Right lobe of liver (tissue), 6 donors: ENCODE measurements at regions of chr10 and their contacts with region 1.

Region 1: GRCh38 chr10:71569775-71570588 is 149.6 kb downstream of the C10orf105 start:
- DNase-seq: peak in 2 of 3 donors; percentile 57 to 79
- ATAC-seq: peak; percentile 71 to 90 (median 82)
- H3K4me3 ChIP-seq: no peak overlapping the region
- H3K27ac ChIP-seq: no peak overlapping the region
- H3K4me1 ChIP-seq: no peaks in the 10 kb centered on the region
- H3K27me3 ChIP-seq: no peaks in the 10 kb centered on the region
- CTCF ChIP-seq: peak; percentile 85 to 88 (median 86)
- POLR2A ChIP-seq: no peak

Region 2: GRCh38 chr10:71390461-71390835 is 179.5 kb before region 1 on chr10:
- intact Hi-C with region 1: loop called (anchors 5 kb)
- DNase-seq: peak in 1 of 3 donors; percentile 38
- ATAC-seq: no peak
- H3K4me3 ChIP-seq: no peak overlapping the region
- H3K27ac ChIP-seq: no peak overlapping the region
- H3K4me1 ChIP-seq: no peaks in the 10 kb centered on the region
- H3K27me3 ChIP-seq: no peaks in the 10 kb centered on the region
- CTCF ChIP-seq: no peak
- POLR2A ChIP-seq: no peak

Region 3: DNA sequence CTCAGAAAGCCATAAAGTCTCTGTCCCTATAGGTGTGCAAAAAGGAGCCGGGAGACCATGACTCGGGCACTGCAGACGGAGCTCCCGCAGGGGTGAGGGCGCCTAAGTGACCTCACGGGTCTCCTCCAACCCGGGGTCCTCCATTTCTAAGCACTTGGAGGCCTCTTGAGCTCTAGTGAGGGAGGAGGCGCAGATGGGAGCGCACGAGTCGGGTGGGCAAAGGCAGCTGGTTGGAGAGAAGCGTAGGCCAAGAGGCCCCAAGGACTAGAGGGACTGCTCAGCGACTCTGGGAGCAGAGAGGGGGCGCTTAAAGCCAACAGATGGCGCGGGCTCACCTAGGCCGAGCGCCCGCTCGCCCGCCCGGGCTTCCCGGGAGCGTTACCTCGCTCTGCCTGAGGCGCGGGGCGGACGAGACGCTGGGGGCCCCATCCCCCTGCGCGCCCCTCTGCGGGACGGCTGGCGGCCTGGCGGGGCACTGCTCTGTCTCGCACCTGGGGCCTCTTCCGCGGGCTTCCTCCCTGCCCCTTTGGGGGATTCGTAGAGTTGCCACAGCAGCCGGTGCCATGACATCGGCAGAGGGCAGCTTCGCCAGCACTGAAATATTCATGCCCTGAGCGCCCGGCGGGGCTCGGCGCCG is 173.8 kb before region 1 on chr10:
- intact Hi-C with region 1: loop called (anchors 5 kb)
- DNase-seq: peak; percentile 58 to 72 (median 71)
- ATAC-seq: peak; percentile 84 to 87 (median 86)
- H3K4me3 ChIP-seq: peak overlapping the region; percentile 37 to 58 (median 47)
- H3K27ac ChIP-seq: no peak overlapping the region
- H3K4me1 ChIP-seq: peaks cover 0 to 12% (median 0%) of the 10 kb centered on the region in 4 donors
- H3K27me3 ChIP-seq: no peaks in the 10 kb centered on the region
- CTCF ChIP-seq: peak; percentile 40 to 65 (median 57)
- POLR2A ChIP-seq: no peak

Region 4: DNA sequence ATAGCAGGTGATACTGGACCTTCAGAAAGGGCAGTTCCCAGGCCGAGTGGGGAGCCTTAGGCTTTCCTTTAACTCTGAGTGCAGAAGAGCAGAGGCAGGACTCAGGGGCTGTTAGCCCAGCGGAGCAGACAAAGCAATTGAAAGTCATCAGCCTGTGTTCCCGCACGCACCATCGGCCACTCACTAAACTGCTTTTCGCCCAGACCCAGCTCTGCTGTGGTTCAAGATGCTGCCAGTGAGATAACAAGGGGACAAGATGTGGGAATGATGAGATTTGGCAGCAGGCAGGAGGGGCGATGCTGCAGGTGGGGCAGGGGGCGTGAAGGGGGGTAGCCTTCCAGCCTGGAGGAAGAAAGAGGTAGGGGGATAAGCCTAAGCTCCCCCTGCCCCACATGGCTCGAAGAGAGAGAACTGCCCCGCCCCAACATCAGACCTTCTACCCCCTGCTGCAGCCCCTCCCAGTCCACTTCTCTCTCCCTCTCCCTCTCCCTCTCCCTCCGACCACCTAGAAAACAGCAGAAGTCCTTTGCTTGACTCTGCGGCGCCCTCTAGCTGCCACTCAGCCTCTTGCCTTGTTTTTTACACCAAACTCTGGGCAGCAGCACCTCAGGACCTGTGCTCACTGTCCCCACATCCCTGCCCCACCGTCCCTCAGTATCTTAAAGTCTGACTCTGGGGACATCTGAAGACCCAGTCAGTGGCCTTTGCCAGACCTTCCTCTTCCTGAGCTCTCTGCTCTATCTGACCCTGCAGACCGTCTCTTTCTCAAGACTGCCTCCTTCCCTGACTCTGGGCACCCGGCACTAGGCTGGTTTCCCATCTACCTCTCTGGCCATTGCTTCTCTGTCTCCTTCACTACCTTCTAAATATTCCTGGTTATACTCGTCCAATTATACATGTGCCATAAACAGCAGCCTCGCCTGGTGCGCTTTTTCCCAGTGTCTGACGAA is 39.1 kb after region 1 on chr10:
- intact Hi-C with region 1: loop called in 1 of 2 experiments (anchors 5 kb)
- DNase-seq: peak; percentile 79 to 81 (median 80)
- ATAC-seq: peak; percentile 56 to 80 (median 68)
- H3K4me3 ChIP-seq: no peak overlapping the region
- H3K27ac ChIP-seq: no peak overlapping the region
- H3K4me1 ChIP-seq: peaks cover 0 to 14% (median 8%) of the 10 kb centered on the region in 4 donors
- H3K27me3 ChIP-seq: no peaks in the 10 kb centered on the region
- CTCF ChIP-seq: peak; percentile 73 to 82 (median 76)
- POLR2A ChIP-seq: no peak

Region 5: DNA sequence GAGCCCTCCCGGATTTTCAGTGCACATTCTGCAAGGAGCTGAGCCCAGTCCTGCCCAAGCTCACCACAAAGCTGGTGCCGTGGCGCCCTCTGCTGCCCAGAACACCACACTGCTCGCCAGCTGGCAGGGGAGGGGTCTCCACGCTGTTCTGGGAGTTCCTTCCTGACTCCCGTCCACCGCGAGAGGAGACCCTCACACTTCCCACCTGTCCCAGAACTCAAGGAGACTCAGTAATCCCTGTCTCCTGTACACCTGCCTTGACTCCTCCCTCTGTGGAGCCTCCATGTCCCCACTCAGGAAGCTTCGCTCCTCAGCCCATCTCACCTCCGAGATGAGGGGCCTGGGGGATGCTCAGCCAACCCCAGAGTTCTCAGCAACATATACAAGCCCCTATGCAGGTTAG is 138.3 kb after region 1 on chr10:
- intact Hi-C with region 1: no loop called
- DNase-seq: peak in 2 of 3 donors; percentile 69 to 75
- ATAC-seq: peak; percentile 49 to 71 (median 64)
- H3K4me3 ChIP-seq: no peak overlapping the region
- H3K27ac ChIP-seq: no peak overlapping the region
- H3K4me1 ChIP-seq: peaks cover 0 to 6% (median 0%) of the 10 kb centered on the region in 4 donors
- H3K27me3 ChIP-seq: no peaks in the 10 kb centered on the region
- CTCF ChIP-seq: peak; percentile 73 to 93 (median 82)
- POLR2A ChIP-seq: no peak